ENCODE measurements at regions of chr3 and their contacts with region 1.

Region 1: GRCh38 chr3:100210772-100211135 is 50.0 kb upstream of the TBC1D23 start:
- DNase-seq: peak; percentile 94
- H3K4me3 ChIP-seq: no peak overlapping the region
- CTCF ChIP-seq: no peak

Region 2: DNA sequence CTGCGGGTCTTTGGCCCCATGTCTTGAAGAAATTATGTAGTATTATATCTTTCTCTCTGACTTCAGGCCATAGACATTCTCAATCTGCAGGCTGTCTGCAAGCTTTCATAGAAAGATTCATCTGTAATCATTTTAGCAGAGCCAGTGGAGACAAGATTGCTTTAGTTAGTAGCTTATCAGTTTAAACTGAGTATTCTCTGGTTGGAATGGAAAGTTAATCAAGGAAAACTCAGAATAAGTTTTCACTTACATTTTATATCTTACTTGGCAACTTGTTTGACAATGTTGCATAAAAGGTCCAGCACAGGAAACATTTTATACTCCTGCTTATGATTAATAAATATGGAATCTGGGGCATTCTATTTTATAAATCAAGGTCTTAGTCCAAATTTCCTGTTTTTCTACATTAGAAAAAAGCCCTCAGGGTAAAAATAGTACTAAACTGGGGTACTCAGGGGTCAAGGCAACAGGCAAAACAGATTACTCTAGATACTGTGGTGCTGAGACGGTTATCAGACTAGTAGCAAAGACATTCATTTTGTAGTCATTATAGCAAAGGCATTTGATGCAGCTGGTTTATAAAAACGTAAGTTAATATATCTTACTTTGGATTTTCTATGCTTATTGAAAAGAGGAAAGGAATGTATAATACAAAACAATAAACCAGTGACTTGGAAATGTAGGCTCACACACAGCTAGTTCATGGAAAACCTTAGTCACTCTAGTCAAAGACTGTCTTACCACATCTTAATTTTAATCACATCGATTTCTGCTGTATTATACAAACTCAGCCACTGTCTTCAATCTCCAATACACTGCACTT is 51.2 kb before region 1 on chr3:
- in situ Hi-C with region 1: loop called (anchors 10 kb)
- DNase-seq: peak; percentile 22
- H3K4me3 ChIP-seq: no peak overlapping the region
- CTCF ChIP-seq: no peak

Region 3: GRCh38 chr3:100260685-100261484 is 50.1 kb after region 1 on chr3 and contains the start of gene TBC1D23:
- in situ Hi-C with region 1: no loop called
- DNase-seq: peak; percentile 99
- H3K4me3 ChIP-seq: peak within 1 kb of the TSS; percentile 81
- CTCF ChIP-seq: no peak

Region 4: GRCh38 chr3:100289339-100289738 is 78.6 kb after region 1 on chr3:
- in situ Hi-C with region 1: no loop called
- DNase-seq: no peak
- H3K4me3 ChIP-seq: no peak overlapping the region
- CTCF ChIP-seq: no peak

Region 5: DNA sequence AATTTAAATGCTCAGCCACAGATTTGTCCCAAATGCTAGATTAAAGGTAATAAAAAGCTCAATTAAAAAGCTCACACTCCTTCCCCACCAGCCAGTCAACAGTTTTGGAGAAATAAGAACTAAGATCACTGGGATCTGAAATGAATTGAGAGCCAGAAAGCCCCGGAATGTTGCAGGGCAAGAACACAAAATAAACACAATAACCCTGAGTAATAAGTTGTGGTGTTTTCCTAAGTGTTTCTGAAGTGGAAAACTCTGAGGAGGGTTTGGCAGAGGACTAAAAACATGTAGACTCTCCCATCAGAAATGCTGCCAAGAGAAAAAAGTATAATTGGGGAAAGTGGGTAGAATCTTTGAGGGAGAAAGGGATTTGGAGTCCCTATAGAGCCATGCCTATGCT is 654.7 kb after region 1 on chr3:
- in situ Hi-C with region 1: no loop called
- DNase-seq: peak; percentile 76
- H3K4me3 ChIP-seq: no peak overlapping the region
- CTCF ChIP-seq: no peak